ENCODE measurements at regions of chrX and their contacts with region 1.

Region 1: GRCh38 chrX:131710431-131711045 is 166.7 kb downstream of the OR13H1 start:
- DNase-seq: no peak
- H3K4me3 ChIP-seq: no peak overlapping the region
- H3K27ac ChIP-seq: no peak overlapping the region
- H3K4me1 ChIP-seq: no peaks in the 10 kb centered on the region
- H3K27me3 ChIP-seq: no peaks in the 10 kb centered on the region
- CTCF ChIP-seq: no peak

Region 2: DNA sequence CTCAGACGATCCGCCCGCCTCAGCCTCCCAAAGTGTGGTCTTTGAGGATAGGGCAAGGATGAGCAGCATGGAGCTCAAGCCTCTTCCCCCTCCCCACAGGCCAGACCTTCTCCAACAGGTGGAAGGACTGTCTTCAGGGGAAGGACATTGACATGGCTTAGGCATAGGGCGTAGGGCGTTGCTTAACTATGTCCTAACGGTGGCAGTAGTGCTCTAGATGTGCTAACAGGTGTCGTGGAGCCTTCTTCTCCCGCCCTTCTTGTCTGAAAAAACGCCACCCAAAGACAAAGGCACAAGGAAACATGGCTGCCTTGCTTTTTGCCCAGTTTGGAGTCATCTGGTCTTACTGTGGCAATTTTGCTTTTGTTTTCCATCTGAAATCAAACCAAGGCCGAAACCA is 53.1 kb after region 1 on chrX:
- CTCF ChIA-PET with region 1: no interaction called
- POLR2A ChIA-PET with region 1: no interaction called
- intact Hi-C with region 1: loop called (anchors 5 kb)
- DNase-seq: peak; percentile 29
- H3K4me3 ChIP-seq: no peak overlapping the region
- H3K27ac ChIP-seq: no peak overlapping the region
- H3K4me1 ChIP-seq: no peaks in the 10 kb centered on the region
- H3K27me3 ChIP-seq: no peaks in the 10 kb centered on the region
- CTCF ChIP-seq: no peak

Region 3: DNA sequence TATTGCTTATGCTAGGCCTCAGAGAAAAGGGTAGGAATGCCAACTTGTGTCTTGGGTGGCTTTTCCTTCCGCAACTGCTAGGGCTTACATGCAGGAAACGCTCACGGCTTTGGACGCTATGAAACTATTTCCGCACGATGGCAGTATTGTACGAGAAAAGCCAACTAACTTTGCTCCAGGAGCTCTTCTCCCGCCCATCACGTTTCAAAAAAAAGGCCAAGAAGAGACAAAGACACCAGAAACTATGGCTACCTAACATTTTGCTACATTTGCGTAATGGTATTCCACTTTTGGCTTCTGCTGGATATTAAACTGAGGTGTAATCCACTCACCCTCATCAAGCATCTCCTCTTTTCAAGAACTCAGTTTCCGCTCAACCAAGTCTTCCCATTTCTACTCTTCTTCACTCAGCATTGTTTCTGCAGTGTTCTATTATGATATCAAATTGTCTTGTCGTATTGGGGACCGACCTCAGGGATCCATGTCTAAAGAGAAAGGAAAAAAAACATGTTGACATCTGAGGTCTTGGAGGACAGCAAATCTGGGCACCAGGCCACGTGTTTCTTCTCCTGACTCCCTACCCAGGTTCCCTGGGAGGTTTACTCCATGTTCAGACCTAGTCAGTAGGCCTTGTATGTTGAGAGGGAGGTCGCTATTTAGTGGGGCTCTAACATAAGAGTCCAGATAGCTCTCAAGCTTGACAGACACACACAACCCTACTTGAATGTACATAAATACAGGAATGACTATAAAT is 73.2 kb after region 1 on chrX:
- CTCF ChIA-PET with region 1: no interaction called
- POLR2A ChIA-PET with region 1: no interaction called
- intact Hi-C with region 1: loop called (anchors 5 kb)
- DNase-seq: peak; percentile 90
- H3K4me3 ChIP-seq: no peak overlapping the region
- H3K27ac ChIP-seq: no peak overlapping the region
- H3K4me1 ChIP-seq: no peaks in the 10 kb centered on the region
- H3K27me3 ChIP-seq: no peaks in the 10 kb centered on the region
- CTCF ChIP-seq: peak; percentile 59

Measured in A673 (cell line).